ENCODE measurements at regions of chr1 and their contacts with region 1.

Region 1: DNA sequence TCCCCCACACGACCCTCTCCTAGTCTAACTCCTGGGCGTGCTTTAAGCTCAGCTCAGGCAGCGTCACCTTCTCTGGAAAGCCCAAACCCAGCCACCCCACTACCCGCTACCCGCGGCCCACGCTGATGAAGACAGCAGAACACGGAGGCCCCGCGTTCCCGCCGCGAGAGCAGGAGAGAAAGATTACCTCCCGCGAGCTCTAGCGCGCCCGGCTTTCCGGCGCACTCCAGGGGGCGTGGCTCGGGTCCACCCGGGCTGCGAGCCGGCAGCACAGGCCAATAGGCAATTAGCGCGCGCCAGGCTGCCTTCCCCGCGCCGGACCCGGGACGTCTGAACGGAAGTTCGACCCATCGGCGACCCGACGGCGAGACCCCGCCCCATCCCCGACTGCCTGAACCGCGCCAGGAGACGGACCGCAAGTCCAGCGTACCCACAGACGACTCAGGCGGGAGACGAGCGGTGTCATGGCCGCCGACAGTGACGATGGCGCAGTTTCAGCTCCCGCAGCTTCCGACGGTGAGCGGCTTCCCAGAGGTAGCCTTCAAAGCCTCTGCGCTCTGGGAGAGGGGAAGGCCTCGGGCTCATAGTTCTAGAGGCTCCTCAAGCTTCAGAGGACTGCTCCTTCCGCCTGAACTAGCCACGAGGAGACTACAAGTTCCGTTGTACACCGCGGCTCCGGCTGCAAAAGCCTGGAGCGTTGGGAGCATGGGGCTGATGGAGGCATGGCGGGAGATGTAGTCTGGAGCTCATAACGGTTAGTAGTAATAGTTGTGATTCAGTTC is at the starts of genes MUTYH and TOE1:
- DNase-seq: peak; percentile 96
- H3K4me3 Mint-ChIP-seq: peak within 1 kb of the TSS; percentile 96
- H3K27ac Mint-ChIP-seq: peak within 1 kb of the TSS; percentile 100
- H3K4me1 Mint-ChIP-seq: peaks cover 58% of the 10 kb centered on the region
- H3K27me3 Mint-ChIP-seq: no peaks in the 10 kb centered on the region
- total RNA-seq, gene MUTYH: 37.2 to 39.2 TPM
- total RNA-seq, gene TOE1: 16.6 to 18.3 TPM

Region 2: GRCh38 chr1:44807262-44808062 is 532.5 kb before region 1 on chr1 and contains the start of gene DYNLT4:
- CTCF ChIA-PET with region 1: no interaction called
- POLR2A ChIA-PET with region 1: interaction called, 12 read pairs
- DNase-seq: peak; percentile 93
- H3K4me3 Mint-ChIP-seq: peak within 1 kb of the TSS; percentile 73
- H3K27ac Mint-ChIP-seq: peak within 1 kb of the TSS; percentile 98
- H3K4me1 Mint-ChIP-seq: peaks cover 92% of the 10 kb centered on the region
- H3K27me3 Mint-ChIP-seq: no peaks in the 10 kb centered on the region
- total RNA-seq, gene DYNLT4: 1.9 to 2.2 TPM

Region 3: GRCh38 chr1:45018599-45019230 is 321.3 kb before region 1 on chr1:
- CTCF ChIA-PET with region 1: interaction called, 12 read pairs
- POLR2A ChIA-PET with region 1: interaction called, 10 read pairs
- DNase-seq: peak; percentile 66
- H3K4me3 Mint-ChIP-seq: no peak overlapping the region
- H3K27ac Mint-ChIP-seq: no peak overlapping the region
- H3K4me1 Mint-ChIP-seq: peaks cover 10% of the 10 kb centered on the region
- H3K27me3 Mint-ChIP-seq: no peaks in the 10 kb centered on the region

Region 4: GRCh38 chr1:45065083-45065482 is 274.9 kb before region 1 on chr1:
- CTCF ChIA-PET with region 1: no interaction called
- POLR2A ChIA-PET with region 1: no interaction called
- DNase-seq: no peak
- H3K4me3 Mint-ChIP-seq: no peak overlapping the region
- H3K27ac Mint-ChIP-seq: no peak overlapping the region
- H3K4me1 Mint-ChIP-seq: no peaks in the 10 kb centered on the region
- H3K27me3 Mint-ChIP-seq: no peaks in the 10 kb centered on the region

Region 5: DNA sequence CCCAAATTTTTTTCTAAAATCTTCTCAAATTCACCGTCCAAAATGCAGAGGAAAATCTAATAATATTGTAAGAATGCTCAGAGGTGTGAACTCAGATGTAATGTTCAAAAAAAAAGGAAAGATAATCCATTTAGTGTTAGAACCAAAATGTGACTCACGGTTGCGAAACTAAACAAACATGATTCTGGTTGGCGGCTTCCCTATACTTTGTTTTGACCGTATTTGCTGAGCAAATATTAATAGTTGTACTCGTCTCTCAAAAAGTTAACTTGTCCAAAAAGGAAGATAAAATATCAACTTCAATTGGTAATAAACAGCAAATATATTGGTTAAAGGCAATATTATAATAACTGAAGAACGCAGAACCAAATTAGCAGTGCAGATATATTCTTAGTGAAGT is 168.0 kb before region 1 on chr1:
- CTCF ChIA-PET with region 1: no interaction called
- POLR2A ChIA-PET with region 1: no interaction called
- DNase-seq: no peak
- H3K4me3 Mint-ChIP-seq: no peak overlapping the region
- H3K27ac Mint-ChIP-seq: no peak overlapping the region
- H3K4me1 Mint-ChIP-seq: no peaks in the 10 kb centered on the region
- H3K27me3 Mint-ChIP-seq: no peaks in the 10 kb centered on the region

Region 6: DNA sequence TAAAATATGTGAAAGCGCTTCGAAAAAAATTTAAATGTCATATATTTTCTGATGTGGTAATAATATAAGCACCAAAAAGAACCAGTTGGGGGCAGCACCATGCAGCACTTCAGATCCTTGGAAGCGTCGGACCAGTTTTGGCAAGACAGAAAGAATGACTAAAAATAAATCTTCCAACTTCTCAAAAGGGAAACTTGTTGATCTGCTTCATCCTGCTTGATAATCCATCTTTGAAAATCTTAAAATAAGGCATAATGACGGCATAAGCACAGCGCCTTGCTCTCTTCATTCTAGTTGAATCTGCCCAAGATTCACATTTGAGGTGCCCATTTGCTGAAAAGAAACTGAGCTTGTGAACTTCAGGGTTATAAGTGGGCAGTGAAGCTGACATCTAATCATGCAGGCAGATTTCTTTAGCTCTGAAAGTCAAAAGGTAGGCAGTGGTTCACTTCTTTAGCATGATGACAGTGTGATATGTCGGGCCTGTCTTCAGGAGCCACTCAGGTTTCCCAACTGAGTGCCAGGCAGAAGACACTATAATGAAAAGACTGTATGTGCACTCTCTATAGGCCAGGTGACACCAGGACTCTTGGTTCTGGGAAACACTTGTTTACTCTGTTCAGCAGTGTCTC is 20.0 kb after region 1 on chr1:
- CTCF ChIA-PET with region 1: interaction called, 11 read pairs
- POLR2A ChIA-PET with region 1: interaction called, 12 read pairs
- DNase-seq: peak; percentile 58
- H3K4me3 Mint-ChIP-seq: no peak overlapping the region
- H3K27ac Mint-ChIP-seq: no peak overlapping the region
- H3K4me1 Mint-ChIP-seq: peaks cover 6% of the 10 kb centered on the region
- H3K27me3 Mint-ChIP-seq: no peaks in the 10 kb centered on the region

Region 7: GRCh38 chr1:45385302-45385701 is 45.3 kb after region 1 on chr1:
- CTCF ChIA-PET with region 1: no interaction called
- POLR2A ChIA-PET with region 1: no interaction called
- DNase-seq: no peak
- H3K4me3 Mint-ChIP-seq: no peak overlapping the region
- H3K27ac Mint-ChIP-seq: no peak overlapping the region
- H3K4me1 Mint-ChIP-seq: no peaks in the 10 kb centered on the region
- H3K27me3 Mint-ChIP-seq: no peaks in the 10 kb centered on the region

Region 8: DNA sequence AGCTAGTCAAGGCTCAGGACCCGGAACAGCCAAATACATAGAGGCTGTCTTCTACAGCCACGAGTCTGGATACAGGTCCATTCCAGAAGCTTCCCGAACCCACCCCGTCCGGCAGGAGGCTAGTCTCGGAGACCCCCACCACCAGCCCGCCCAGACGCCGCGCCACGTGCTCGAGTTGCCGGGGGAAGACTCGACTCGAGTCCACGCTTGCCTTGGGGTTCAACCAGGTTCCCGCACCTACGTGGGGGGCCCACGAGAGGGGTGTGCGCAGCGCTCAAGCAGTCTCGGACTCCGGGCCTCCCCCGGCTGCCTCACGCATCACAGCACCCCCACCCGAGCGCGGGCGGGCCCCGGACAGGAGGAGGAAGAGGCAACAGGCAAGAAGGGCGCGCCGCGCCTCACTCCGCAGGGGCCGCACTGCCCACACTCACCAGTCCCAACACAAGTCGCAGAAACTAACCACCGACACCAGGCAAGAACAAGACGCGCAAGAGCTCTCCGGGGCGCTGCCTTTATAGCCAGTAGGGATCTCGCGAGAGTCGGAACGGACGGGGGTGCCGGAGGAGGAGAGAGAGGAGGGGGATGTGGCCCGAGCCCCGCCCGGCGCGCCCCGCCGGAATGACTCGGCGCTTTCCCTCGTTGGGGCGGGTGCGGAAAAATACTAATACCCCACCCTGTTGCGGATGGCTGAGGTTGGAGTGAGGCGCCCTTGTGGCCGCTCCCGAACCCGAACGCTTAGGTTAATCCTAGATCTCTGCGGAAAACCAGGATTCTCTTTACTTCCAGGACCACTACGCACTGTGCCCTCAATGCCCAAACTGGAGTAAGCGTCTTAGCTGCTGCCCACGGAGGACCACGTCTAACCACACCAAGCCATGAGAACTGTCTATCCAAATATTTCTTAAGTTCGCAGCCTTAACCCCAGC is 181.7 kb after region 1 on chr1 and contains the start of gene PRDX1:
- CTCF ChIA-PET with region 1: interaction called, 4 read pairs
- POLR2A ChIA-PET with region 1: interaction called, 37 read pairs
- DNase-seq: peak; percentile 97
- H3K4me3 Mint-ChIP-seq: peak within 1 kb of the TSS; percentile 95
- H3K27ac Mint-ChIP-seq: peak within 1 kb of the TSS; percentile 88
- H3K4me1 Mint-ChIP-seq: peaks cover 49% of the 10 kb centered on the region
- H3K27me3 Mint-ChIP-seq: peaks cover 10% of the 10 kb centered on the region
- total RNA-seq, gene PRDX1: 296 to 309 TPM